ENCODE measurements at regions of chr3 and their contacts with region 1.

Region 1: DNA sequence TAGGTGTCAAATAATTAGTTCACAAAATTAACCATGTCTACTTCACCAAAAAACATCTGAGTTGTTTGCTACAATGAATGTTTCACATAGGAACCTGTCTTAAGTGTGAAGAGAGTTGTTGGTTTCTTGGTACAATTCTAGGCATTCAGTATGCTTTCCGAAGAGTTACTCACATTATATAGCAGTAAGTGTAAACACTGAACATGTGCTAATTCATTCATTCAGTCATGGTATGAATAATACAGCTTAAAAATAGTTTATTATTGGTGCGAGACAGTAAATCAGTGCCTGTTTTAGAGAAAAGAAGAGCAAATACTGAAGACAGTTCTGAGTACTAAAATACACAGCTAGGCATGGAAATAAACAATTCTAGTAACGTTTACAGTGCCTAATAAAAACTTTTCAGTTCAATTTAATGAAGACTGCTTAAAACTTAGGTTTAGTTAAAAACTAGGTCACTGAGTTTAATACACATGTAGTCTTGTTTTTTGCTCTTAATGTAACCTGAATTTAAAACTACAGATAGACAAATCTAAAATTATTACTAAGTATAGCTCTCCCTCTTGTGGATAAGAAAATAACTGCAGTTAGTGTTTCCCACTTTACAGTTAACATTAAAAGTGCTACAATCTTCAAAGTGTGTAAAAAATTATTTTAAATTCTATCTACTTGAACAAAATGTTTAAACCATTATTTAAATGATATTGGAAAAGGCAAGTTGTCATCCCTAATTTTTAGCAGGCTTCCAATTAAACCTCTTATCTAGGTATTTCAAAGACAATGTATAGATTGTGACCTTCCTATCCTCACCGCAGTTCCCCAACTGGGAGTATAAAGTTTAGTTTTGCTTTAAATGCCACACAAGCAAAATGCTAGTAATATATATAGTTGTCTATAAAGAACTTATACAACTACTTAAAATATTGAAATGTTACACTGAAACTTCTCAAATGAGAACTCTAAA is 20.1 kb upstream of the ZCWPW2 start:
- DNase-seq: peak; percentile 56
- ATAC-seq: peak; percentile 43
- H3K4me3 ChIP-seq: no peak overlapping the region
- H3K4me3 Mint-ChIP-seq: no peak overlapping the region
- H3K27ac ChIP-seq: no peak overlapping the region
- H3K27ac Mint-ChIP-seq: no peak overlapping the region
- H3K4me1 ChIP-seq: no peaks in the 10 kb centered on the region
- H3K4me1 Mint-ChIP-seq: no peaks in the 10 kb centered on the region
- H3K27me3 ChIP-seq: no peaks in the 10 kb centered on the region
- H3K27me3 Mint-ChIP-seq: no peaks in the 10 kb centered on the region
- CTCF ChIP-seq: peak; percentile 94

Region 2: GRCh38 chr3:27134165-27134796 is 1194.2 kb before region 1 on chr3:
- CTCF ChIA-PET with region 1: interaction called, 17 read pairs
- POLR2A ChIA-PET with region 1: no interaction called
- intact Hi-C with region 1: no loop called
- DNase-seq: peak; percentile 65
- ATAC-seq: peak; percentile 76
- H3K4me3 ChIP-seq: no peak overlapping the region
- H3K4me3 Mint-ChIP-seq: no peak overlapping the region
- H3K27ac ChIP-seq: no peak overlapping the region
- H3K27ac Mint-ChIP-seq: no peak overlapping the region
- H3K4me1 ChIP-seq: no peaks in the 10 kb centered on the region
- H3K4me1 Mint-ChIP-seq: no peaks in the 10 kb centered on the region
- H3K27me3 ChIP-seq: no peaks in the 10 kb centered on the region
- H3K27me3 Mint-ChIP-seq: peaks cover 12% of the 10 kb centered on the region
- CTCF ChIP-seq: peak; percentile 94

Region 3: GRCh38 chr3:27312044-27312668 is 1016.3 kb before region 1 on chr3:
- CTCF ChIA-PET with region 1: interaction called, 35 read pairs
- POLR2A ChIA-PET with region 1: no interaction called
- intact Hi-C with region 1: no loop called
- DNase-seq: peak; percentile 66
- ATAC-seq: peak; percentile 56
- H3K4me3 ChIP-seq: no peak overlapping the region
- H3K4me3 Mint-ChIP-seq: no peak overlapping the region
- H3K27ac ChIP-seq: no peak overlapping the region
- H3K27ac Mint-ChIP-seq: no peak overlapping the region
- H3K4me1 ChIP-seq: no peaks in the 10 kb centered on the region
- H3K4me1 Mint-ChIP-seq: no peaks in the 10 kb centered on the region
- H3K27me3 ChIP-seq: no peaks in the 10 kb centered on the region
- H3K27me3 Mint-ChIP-seq: no peaks in the 10 kb centered on the region
- CTCF ChIP-seq: peak; percentile 85

Region 4: DNA sequence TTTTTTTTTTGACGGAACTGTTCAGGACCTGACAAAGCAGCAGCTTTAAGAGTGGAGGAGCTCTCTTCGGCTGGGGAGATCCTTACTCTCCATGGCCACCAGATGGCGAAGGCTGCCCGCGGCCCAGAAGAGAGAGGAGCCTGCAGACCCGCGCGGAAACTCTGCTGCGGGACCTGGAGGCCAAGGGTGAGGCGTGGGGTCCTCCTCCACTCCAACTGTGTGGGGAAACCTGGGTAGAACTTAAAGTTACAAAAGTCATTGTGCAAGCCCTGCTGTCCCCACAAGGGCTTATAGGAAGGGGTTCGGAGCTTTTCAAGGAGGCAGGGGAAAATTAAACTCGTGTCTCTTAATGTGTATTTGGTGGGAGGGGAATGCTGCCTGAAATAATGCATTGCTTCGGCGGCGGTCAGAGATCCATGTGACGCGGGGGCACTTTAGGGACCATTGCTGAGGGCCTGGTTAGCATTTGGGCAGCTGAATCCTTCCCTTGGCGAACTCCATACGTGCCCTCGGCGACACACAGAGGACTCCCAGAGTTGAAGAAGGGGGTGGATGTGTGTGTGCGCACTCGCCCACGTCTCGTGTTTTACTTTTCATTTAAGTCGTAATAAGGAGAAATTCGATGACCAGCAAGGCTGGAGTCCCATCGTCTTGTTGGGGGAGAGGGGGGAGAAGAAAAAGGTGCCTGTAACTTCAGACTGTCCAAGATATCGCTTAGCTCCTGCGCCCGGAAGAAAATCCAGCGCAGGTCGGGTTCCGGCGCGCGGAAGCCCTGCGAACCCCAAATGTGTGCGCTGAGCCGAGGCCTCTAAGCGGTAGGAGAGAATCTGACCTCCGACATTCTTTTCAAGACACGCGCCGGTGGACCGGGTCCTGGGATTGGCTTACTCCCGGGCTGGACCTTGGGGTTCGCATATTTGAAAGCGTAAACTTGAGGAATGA is 616.1 kb before region 1 on chr3:
- CTCF ChIA-PET with region 1: interaction called, 112 read pairs
- POLR2A ChIA-PET with region 1: interaction called, 10 read pairs
- intact Hi-C with region 1: loop called (anchors 1 kb)
- DNase-seq: peak; percentile 82
- ATAC-seq: peak; percentile 97
- H3K4me3 ChIP-seq: peak overlapping the region; percentile 50 to 79 (median 66)
- H3K4me3 Mint-ChIP-seq: peak overlapping the region; percentile 94
- H3K27ac ChIP-seq: no peak overlapping the region
- H3K27ac Mint-ChIP-seq: peak overlapping the region; percentile 64
- H3K4me1 ChIP-seq: peaks cover 31 to 32% of the 10 kb centered on the region in 2 donors
- H3K4me1 Mint-ChIP-seq: peaks cover 33% of the 10 kb centered on the region
- H3K27me3 ChIP-seq: peaks cover 0 to 57% (median 51%) of the 10 kb centered on the region in 4 experiments
- H3K27me3 Mint-ChIP-seq: peaks cover 64% of the 10 kb centered on the region
- CTCF ChIP-seq: peak; percentile 82

Region 5: GRCh38 chr3:27721717-27722542 is 606.5 kb before region 1 on chr3 and contains the start of gene EOMES:
- CTCF ChIA-PET with region 1: interaction called, 10 read pairs
- POLR2A ChIA-PET with region 1: no interaction called
- intact Hi-C with region 1: no loop called
- DNase-seq: peak; percentile 77
- ATAC-seq: peak; percentile 68
- H3K4me3 ChIP-seq: peak within 1 kb of the TSS; percentile 28 to 57 (median 51)
- H3K4me3 Mint-ChIP-seq: peak within 1 kb of the TSS; percentile 81
- H3K27ac ChIP-seq: no peak within 1 kb of the TSS
- H3K27ac Mint-ChIP-seq: peak within 1 kb of the TSS; percentile 26
- H3K4me1 ChIP-seq: peaks cover 28 to 35% of the 10 kb centered on the region in 2 donors
- H3K4me1 Mint-ChIP-seq: peaks cover 27% of the 10 kb centered on the region
- H3K27me3 ChIP-seq: peaks cover 2 to 75% (median 71%) of the 10 kb centered on the region in 4 experiments
- H3K27me3 Mint-ChIP-seq: peaks cover 74% of the 10 kb centered on the region
- CTCF ChIP-seq: peak; percentile 10
- total RNA-seq, gene EOMES: 0.10 and 0.19 TPM in 2 replicates

Region 6: DNA sequence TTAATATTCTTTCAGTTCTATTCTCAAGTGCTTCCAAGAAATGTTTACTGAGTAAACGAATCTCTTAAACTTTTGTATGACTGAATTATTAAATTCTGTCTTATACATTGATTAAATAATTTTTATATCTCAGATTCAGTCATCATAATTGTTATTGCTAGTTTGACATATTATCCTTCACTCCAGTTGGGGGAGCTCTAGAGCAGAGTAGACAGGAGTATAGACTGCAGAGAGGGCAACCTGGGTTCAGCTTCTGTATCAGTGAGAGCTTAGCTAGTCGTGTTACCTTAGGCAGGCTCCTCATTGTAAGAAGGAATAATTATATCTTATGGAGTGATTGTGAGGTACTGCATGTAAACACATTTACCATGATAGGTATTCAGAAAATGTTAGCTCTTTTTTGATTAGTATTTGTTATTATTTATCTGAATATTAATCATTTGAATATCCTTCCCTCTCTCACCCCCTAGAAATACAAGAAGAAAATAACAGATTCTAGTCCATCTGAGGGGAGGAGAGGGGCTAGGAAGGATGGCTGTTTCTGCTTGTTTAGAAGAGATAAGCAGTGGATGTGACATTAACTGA is 10.9 kb before region 1 on chr3:
- CTCF ChIA-PET with region 1: interaction called, 12 read pairs
- POLR2A ChIA-PET with region 1: no interaction called
- intact Hi-C with region 1: no loop called
- DNase-seq: peak; percentile 44
- ATAC-seq: peak; percentile 47
- H3K4me3 ChIP-seq: no peak overlapping the region
- H3K4me3 Mint-ChIP-seq: no peak overlapping the region
- H3K27ac ChIP-seq: no peak overlapping the region
- H3K27ac Mint-ChIP-seq: no peak overlapping the region
- H3K4me1 ChIP-seq: no peaks in the 10 kb centered on the region
- H3K4me1 Mint-ChIP-seq: no peaks in the 10 kb centered on the region
- H3K27me3 ChIP-seq: no peaks in the 10 kb centered on the region
- H3K27me3 Mint-ChIP-seq: no peaks in the 10 kb centered on the region
- CTCF ChIP-seq: peak; percentile 77

Region 7: DNA sequence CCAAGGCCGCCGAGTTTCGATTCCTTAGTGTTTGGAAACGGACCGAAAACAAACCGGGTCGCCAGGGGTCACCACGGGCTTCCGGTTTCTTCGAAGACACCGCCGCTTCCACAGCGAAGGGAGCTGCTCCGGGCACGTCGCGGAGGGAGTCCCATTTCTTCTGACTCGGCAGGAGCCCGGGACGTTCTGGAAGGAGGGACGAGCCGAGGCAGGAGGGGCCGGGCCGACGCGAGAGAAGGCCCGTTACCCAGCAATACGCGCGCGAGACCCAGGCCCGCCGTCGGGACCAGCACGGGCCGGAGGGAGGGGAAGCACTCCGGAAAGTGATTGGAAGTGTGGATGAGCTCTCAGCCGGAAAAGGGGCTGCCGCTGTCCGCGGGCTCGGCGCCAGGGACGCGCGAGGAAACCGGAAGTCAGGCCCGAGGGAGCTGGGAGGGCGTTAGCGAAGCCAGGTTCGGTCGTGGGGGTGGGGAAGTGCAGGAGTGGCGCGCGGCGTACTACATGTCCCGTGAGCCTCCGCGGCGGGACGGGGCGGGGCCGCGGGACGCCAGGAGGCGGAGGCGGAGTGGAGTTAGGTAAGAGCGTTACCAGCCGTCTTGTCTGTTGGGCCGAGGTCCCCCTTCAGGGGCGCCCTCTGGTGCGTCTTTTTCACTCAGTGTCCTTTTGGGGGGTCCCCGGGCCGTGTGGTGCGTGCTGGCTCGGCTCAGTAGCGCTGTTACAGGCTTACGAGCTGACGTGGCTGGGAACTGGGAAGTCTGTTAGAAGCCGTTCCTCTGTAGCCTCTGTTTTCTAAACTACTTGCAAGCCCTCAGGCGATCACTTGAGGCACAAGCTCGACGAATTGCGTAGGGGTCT is 20.4 kb after region 1 on chr3 and contains the starts of genes AZI2 and ZCWPW2:
- CTCF ChIA-PET with region 1: interaction called, 12 read pairs
- POLR2A ChIA-PET with region 1: interaction called, 4 read pairs
- intact Hi-C with region 1: no loop called
- DNase-seq: peak; percentile 94
- ATAC-seq: peak; percentile 88
- H3K4me3 ChIP-seq: peak within 1 kb of the TSS; percentile 74 to 100 (median 92)
- H3K4me3 Mint-ChIP-seq: peak within 1 kb of the TSS; percentile 99
- H3K27ac ChIP-seq: peak within 1 kb of the TSS; percentile 96 to 99
- H3K27ac Mint-ChIP-seq: peak within 1 kb of the TSS; percentile 99
- H3K4me1 ChIP-seq: peaks cover 14 to 15% of the 10 kb centered on the region in 2 donors
- H3K4me1 Mint-ChIP-seq: peaks cover 39% of the 10 kb centered on the region
- H3K27me3 ChIP-seq: no peaks in the 10 kb centered on the region
- H3K27me3 Mint-ChIP-seq: no peaks in the 10 kb centered on the region
- CTCF ChIP-seq: peak; percentile 34
- total RNA-seq, gene AZI2: 21.1 and 29.1 TPM in 2 replicates
- total RNA-seq, gene ZCWPW2: not detected in 2 replicates